Ascending aorta (tissue), 2 donors: ENCODE measurements at regions of chr5 and their contacts with region 1.

Region 1: DNA sequence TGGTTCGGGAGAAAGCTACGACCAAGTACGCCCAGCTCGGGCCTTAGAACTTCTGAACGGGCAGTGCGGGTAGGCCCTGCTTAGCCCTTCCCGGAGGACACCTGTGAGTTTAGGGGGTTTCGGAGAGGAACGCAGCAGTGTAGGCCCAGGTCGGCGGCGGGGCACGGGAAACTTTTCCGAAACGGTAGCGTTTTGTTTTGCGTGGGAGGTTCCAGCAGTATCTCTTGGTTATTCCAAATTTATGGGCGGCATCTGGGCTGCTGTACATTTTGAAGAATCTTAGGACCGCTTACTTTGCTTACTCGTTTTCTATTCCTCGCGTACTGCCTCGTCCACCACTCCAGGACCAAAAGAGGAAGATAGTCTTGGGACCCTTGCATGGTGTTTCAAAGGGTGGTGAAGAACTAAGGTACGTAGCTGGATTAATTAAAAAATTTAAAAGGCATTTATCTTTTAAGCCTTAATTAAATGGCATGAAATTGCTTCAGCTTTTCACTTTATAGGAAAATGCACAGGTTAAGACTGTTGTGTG is 492 bp downstream of the TENT2 start:
- DNase-seq: no peak
- H3K4me3 ChIP-seq: peak overlapping the region; percentile 87 to 99
- H3K27ac ChIP-seq: peak overlapping the region; percentile 95 to 96
- H3K4me1 ChIP-seq: peaks cover 0 to 9% of the 10 kb centered on the region in 2 donors
- H3K27me3 ChIP-seq: no peaks in the 10 kb centered on the region
- CTCF ChIP-seq: no peak

Region 2: DNA sequence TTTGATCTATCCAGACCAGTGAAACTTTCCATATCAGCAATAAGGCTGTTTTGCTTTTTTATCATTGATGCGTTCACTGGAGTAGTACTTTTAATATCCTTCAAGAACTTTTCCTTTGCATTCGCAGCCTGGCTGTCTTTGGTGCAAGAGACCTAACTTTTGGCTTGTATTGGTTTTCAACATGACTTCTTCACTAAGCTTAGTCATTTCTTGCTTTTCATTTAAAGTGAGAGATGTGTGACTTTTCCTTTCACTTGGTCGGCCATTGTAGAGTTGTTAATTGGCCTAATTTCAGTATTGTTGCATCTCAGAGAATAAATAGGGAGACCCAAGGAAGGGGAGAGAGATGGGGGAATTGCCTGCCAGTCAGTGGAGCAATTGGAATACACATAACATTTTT is 50.5 kb after region 1 on chr5:
- intact Hi-C with region 1: no loop called
- DNase-seq: no peak
- H3K4me3 ChIP-seq: no peak overlapping the region
- H3K27ac ChIP-seq: no peak overlapping the region
- H3K4me1 ChIP-seq: no peaks in the 10 kb centered on the region
- H3K27me3 ChIP-seq: no peaks in the 10 kb centered on the region
- CTCF ChIP-seq: no peak

Region 3: DNA sequence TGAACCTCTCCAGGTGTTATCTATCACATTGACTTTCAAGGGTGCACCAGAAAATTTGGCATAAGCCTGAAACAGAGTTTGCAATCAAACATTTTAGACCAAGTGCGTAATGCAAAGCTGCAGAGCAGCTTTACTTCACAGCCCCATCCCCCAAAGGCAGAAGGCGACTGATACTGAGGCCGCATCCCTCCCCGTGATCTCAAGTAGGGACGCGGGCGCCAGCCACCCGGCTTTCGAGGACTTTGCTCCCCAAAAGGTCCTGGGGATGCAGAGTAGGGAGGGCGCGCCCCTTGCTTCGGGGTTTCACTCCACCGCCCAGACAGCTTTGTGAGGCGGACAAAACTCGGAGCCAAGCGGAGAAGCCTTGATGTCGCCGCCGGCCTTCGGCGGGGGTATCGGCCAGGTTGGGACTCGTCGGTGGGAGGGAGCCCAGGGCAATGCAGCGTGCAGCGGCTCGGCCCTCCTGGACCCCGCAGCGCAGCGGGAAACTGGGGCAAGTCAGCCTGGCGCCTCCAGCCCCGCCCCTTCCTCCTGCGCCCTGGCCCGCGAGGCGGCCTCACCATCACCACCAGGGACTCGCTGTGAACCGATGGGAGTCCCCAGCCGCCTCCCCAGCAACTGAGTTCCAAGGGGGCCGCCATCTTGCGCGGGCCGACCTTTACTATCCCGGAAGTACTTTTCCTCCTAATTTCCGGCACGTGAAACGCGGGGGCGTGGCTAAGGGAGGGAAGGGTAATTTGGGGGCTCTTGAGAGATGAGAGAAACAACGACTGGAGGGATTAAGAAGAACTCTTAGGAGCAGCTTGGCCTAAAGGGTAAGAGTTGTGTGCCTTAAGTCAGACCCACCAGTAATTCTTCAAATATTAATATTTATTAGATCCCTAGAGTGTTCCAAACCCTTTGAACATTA is 378.1 kb after region 1 on chr5 and contains the start of gene MTX3:
- intact Hi-C with region 1: loop called (anchors 5 kb)
- DNase-seq: peak; percentile 30 to 88
- H3K4me3 ChIP-seq: peak within 1 kb of the TSS; percentile 64 to 89
- H3K27ac ChIP-seq: peak within 1 kb of the TSS; percentile 56 to 69
- H3K4me1 ChIP-seq: peaks cover 0 to 8% of the 10 kb centered on the region in 2 donors
- H3K27me3 ChIP-seq: no peaks in the 10 kb centered on the region
- CTCF ChIP-seq: no peak
- total RNA-seq, gene MTX3: 7.5 TPM